Activated CD8-positive, alpha-beta T cell treated with anti-CD3 and anti-CD28 coated beads for 36 hours (primary cell): ENCODE measurements at regions of chr17 and their contacts with region 1.

Region 1: GRCh38 chr17:78176548-78177025 is 8.2 kb downstream of the SYNGR2 start:
- DNase-seq: peak; percentile 81
- ATAC-seq: peak; percentile 87
- H3K4me3 Mint-ChIP-seq: no peak overlapping the region
- H3K27ac Mint-ChIP-seq: no peak overlapping the region
- H3K4me1 Mint-ChIP-seq: peaks cover 40% of the 10 kb centered on the region
- H3K27me3 Mint-ChIP-seq: no peaks in the 10 kb centered on the region
- CTCF ChIP-seq: peak; percentile 93

Region 2: GRCh38 chr17:78010759-78011158 is 165.8 kb before region 1 on chr17:
- CTCF ChIA-PET with region 1: no interaction called
- POLR2A ChIA-PET with region 1: no interaction called
- intact Hi-C with region 1: no loop called
- DNase-seq: peak; percentile 44
- ATAC-seq: no peak
- H3K4me3 Mint-ChIP-seq: peak overlapping the region; percentile 50
- H3K27ac Mint-ChIP-seq: peak overlapping the region; percentile 56
- H3K4me1 Mint-ChIP-seq: peaks cover 28% of the 10 kb centered on the region
- H3K27me3 Mint-ChIP-seq: no peaks in the 10 kb centered on the region
- CTCF ChIP-seq: no peak

Region 3: DNA sequence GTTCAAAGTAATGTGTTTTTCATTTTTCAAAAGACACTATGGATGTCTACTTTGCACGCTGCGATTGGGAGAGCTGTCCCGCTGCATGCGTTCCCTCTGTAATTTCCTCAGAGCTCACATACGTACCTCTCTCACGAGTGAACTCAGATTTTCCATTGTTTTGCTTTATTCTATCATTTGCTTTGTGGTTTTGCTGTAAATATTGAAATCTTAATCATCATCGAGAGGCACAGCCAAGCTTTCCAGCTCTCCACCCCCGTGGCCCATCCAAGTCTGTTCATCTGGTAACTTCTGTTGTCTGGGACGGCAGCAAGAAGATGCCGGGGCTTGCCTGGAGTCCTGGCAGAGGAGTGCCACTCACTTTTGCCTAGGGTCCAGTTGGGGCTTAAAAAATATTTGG is 69.1 kb before region 1 on chr17:
- CTCF ChIA-PET with region 1: interaction called, 31 read pairs
- POLR2A ChIA-PET with region 1: interaction called, 9 read pairs
- intact Hi-C with region 1: no loop called
- DNase-seq: peak; percentile 28
- ATAC-seq: peak; percentile 45
- H3K4me3 Mint-ChIP-seq: no peak overlapping the region
- H3K27ac Mint-ChIP-seq: peak overlapping the region; percentile 67
- H3K4me1 Mint-ChIP-seq: peaks cover 20% of the 10 kb centered on the region
- H3K27me3 Mint-ChIP-seq: no peaks in the 10 kb centered on the region
- CTCF ChIP-seq: no peak

Region 4: DNA sequence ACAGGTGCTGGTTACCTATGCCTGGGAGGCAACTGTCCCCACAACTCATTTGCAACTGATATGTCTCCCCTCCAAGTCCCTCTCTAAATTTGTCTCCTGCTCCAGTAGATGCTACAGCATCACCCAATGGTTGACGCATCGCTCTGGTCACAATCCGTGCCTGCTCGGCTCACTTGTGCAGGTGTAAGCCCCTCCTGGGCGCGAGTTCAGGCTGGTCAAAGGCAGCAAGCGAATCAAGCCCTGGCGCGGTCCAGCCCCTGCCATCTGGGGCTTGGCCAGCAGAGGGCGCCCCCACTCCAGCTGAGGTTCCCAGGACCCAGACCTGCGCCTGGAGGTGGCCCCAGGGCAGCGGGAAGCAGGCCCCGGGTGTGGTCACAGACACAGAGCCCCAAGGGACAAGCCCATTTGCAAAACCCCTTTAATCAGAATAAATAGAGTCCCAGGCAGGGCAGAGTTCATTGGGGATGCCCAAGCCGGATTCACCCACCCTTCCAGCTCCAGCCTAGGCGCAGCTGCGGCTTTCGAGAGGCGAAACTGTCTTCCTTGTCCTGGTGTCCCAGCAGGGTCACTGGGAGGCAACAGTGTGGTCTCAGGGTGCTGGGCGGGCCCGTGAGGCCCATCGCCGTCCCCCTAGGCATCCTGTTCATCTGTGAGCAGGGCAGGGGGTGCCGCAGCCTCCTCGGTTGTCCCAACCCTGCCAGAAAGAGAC is 63.9 kb before region 1 on chr17:
- CTCF ChIA-PET with region 1: interaction called, 31 read pairs
- POLR2A ChIA-PET with region 1: interaction called, 9 read pairs
- intact Hi-C with region 1: no loop called
- DNase-seq: peak; percentile 85
- ATAC-seq: peak; percentile 65
- H3K4me3 Mint-ChIP-seq: no peak overlapping the region
- H3K27ac Mint-ChIP-seq: peak overlapping the region; percentile 80
- H3K4me1 Mint-ChIP-seq: peaks cover 44% of the 10 kb centered on the region
- H3K27me3 Mint-ChIP-seq: no peaks in the 10 kb centered on the region
- CTCF ChIP-seq: peak; percentile 99

Region 5: DNA sequence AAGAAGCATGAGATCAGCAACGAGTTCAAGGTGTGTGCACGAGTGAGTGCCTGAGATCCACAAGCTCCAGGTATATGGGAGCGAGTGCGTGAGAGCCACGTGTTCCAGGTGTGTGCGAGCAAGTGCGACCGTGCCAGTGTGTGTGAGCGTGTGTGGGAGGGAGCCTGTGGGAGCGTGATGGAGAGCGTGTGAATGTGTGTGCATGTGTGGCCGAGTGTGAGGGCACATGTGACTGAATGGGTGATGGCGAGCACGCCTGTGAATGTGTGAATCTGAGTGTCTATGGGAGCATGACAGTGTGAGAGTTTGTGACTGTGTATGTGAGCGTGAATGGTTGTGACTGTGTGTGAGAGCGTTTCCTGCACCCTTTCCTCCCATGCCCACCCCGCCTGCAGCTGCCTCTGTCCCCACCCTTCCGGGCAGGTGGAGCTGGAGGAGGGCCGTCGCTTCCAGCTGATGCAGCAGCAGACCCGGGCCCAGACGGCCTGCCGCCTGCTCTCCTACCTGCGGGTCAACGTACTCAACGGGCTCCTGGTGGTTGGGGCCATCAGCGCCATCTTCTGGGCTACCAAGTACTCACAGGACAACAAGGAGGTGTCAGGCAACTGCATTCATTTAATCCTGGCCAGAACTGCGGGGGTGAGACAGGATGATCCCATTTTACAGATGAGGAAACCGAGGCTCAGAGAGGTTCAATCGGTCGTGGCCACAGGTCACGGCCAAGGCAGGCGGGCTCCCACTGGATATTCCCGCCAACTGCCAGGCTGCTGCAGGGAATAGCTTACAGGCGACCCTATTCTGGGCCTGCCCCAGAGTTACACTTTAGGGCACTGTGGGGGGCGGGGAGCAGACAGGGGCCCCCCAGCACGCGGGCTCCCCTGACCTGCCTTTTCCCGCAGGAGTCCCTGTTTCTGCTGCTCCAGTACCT is 42.4 kb before region 1 on chr17:
- CTCF ChIA-PET with region 1: interaction called, 17 read pairs
- POLR2A ChIA-PET with region 1: interaction called, 21 read pairs
- intact Hi-C with region 1: no loop called
- DNase-seq: peak; percentile 88
- ATAC-seq: peak; percentile 8
- H3K4me3 Mint-ChIP-seq: peak overlapping the region; percentile 78
- H3K27ac Mint-ChIP-seq: peak overlapping the region; percentile 69
- H3K4me1 Mint-ChIP-seq: peaks cover 69% of the 10 kb centered on the region
- H3K27me3 Mint-ChIP-seq: no peaks in the 10 kb centered on the region
- CTCF ChIP-seq: peak; percentile 74

Region 6: GRCh38 chr17:78140169-78140976 is 36.2 kb before region 1 on chr17:
- CTCF ChIA-PET with region 1: interaction called, 17 read pairs
- POLR2A ChIA-PET with region 1: interaction called, 33 read pairs
- intact Hi-C with region 1: no loop called
- DNase-seq: peak; percentile 100
- ATAC-seq: peak; percentile 91
- H3K4me3 Mint-ChIP-seq: peak overlapping the region; percentile 28
- H3K27ac Mint-ChIP-seq: peak overlapping the region; percentile 85
- H3K4me1 Mint-ChIP-seq: peaks cover 67% of the 10 kb centered on the region
- H3K27me3 Mint-ChIP-seq: no peaks in the 10 kb centered on the region
- CTCF ChIP-seq: no peak

Region 7: GRCh38 chr17:78186692-78187595 is 10.4 kb after region 1 on chr17 and contains the starts of genes AFMID and TK1:
- CTCF ChIA-PET with region 1: interaction called, 29 read pairs
- POLR2A ChIA-PET with region 1: interaction called, 100 read pairs
- intact Hi-C with region 1: no loop called
- DNase-seq: peak; percentile 96
- ATAC-seq: peak; percentile 98
- H3K4me3 Mint-ChIP-seq: peak within 1 kb of the TSS; percentile 93
- H3K27ac Mint-ChIP-seq: peak within 1 kb of the TSS; percentile 82
- H3K4me1 Mint-ChIP-seq: peaks cover 32% of the 10 kb centered on the region
- H3K27me3 Mint-ChIP-seq: no peaks in the 10 kb centered on the region
- CTCF ChIP-seq: no peak
- total RNA-seq, gene AFMID: 20.8 to 27.9 TPM
- total RNA-seq, gene TK1: 175 to 179 TPM